T-cell (primary cell): ENCODE measurements at regions of chr9 and their contacts with region 1.

Region 1: GRCh38 chr9:126719618-126720031 is 85.2 kb upstream of the ZBTB43 start:
- DNase-seq: peak; percentile 68 to 95 (median 88)
- ATAC-seq: peak; percentile 46 to 73 (median 51)
- H3K4me3 ChIP-seq: peak overlapping the region in 1 of 2 donors; percentile 48
- H3K4me3 Mint-ChIP-seq: peak overlapping the region; percentile 47 to 87 (median 58)
- H3K27ac ChIP-seq: peak overlapping the region; percentile 99
- H3K27ac Mint-ChIP-seq: peak overlapping the region; percentile 96 to 97
- H3K4me1 ChIP-seq: peaks cover 27 to 50% of the 10 kb centered on the region in 2 experiments
- H3K4me1 Mint-ChIP-seq: peaks cover 40 to 53% (median 49%) of the 10 kb centered on the region in 3 donors
- H3K27me3 ChIP-seq: no peaks in the 10 kb centered on the region
- H3K27me3 Mint-ChIP-seq: no peaks in the 10 kb centered on the region

Region 2: GRCh38 chr9:126694206-126695081 is 25.2 kb before region 1 on chr9:
- CTCF ChIA-PET with region 1: no interaction called
- POLR2A ChIA-PET with region 1: no interaction called
- DNase-seq: no peak
- ATAC-seq: no peak
- H3K4me3 ChIP-seq: no peak overlapping the region
- H3K4me3 Mint-ChIP-seq: no peak overlapping the region
- H3K27ac ChIP-seq: no peak overlapping the region
- H3K27ac Mint-ChIP-seq: no peak overlapping the region
- H3K4me1 ChIP-seq: no peaks in the 10 kb centered on the region
- H3K4me1 Mint-ChIP-seq: no peaks in the 10 kb centered on the region
- H3K27me3 ChIP-seq: peaks cover 0 to 49% of the 10 kb centered on the region in 2 experiments
- H3K27me3 Mint-ChIP-seq: peaks cover 19 to 33% of the 10 kb centered on the region in 2 donors

Region 3: DNA sequence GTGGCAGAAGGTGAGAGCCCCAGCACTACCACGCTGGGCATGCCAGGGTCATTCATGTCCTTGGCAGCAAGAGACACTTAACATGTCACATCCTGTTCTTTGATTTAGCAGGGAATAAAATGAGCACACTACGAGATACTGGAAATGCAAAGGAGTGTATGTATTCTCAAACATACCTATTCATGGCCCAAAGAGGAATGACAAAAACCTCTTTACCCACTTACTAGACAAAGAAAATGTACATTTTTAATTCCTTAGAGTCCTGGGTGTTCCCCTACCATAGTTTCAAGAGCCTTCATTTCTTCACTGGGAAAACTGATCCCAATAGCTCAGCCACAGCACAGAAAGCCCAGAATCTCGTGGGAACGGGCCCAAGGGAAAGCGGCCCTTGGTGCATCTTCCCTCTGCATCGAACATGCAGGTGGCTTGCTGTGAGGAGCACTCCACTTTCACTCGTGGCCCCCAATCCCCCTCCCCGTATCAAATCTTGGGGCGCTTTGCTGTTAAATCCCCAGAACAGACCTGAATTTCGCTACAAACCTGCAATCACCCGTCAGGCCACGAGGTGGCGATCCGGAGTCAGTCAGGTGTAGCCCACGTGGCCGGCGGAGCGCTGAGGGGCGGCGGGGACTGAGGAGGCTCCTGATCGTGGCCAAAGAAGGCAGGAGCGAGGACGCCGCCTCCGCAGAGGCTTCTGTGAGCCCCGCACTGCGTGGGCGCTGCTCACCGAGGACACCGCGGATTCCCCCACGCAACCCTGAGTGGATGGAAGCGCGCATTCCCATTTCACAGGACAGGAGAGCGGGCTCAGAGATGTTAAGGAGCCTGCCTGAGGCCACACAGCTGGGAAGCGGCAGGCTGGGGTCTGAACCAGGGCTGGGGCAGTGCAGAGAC is 14.5 kb before region 1 on chr9:
- CTCF ChIA-PET with region 1: interaction called in 1 of 2 experiments, 29 read pairs
- POLR2A ChIA-PET with region 1: interaction called in 1 of 2 experiments, 3 read pairs
- DNase-seq: peak; percentile 61 to 92 (median 80)
- ATAC-seq: peak; percentile 75 to 87 (median 80)
- H3K4me3 ChIP-seq: peak overlapping the region in 1 of 2 donors; percentile 7
- H3K4me3 Mint-ChIP-seq: peak overlapping the region; percentile 37 to 79 (median 56)
- H3K27ac ChIP-seq: no peak overlapping the region
- H3K27ac Mint-ChIP-seq: peak overlapping the region in 1 of 2 donors; percentile 34
- H3K4me1 ChIP-seq: peaks cover 0 to 21% of the 10 kb centered on the region in 2 experiments
- H3K4me1 Mint-ChIP-seq: peaks cover 17 to 19% (median 18%) of the 10 kb centered on the region in 3 donors
- H3K27me3 ChIP-seq: peaks cover 0 to 51% of the 10 kb centered on the region in 2 experiments
- H3K27me3 Mint-ChIP-seq: peaks cover 14 to 46% of the 10 kb centered on the region in 2 donors

Region 4: GRCh38 chr9:126781186-126782052 is 61.8 kb after region 1 on chr9:
- CTCF ChIA-PET with region 1: interaction called, 4 to 13 read pairs
- POLR2A ChIA-PET with region 1: no interaction called
- DNase-seq: peak; percentile 43 to 87 (median 76)
- ATAC-seq: peak; percentile 85 to 95 (median 88)
- H3K4me3 ChIP-seq: no peak overlapping the region
- H3K4me3 Mint-ChIP-seq: no peak overlapping the region
- H3K27ac ChIP-seq: no peak overlapping the region
- H3K27ac Mint-ChIP-seq: no peak overlapping the region
- H3K4me1 ChIP-seq: peaks cover 0 to 7% of the 10 kb centered on the region in 2 experiments
- H3K4me1 Mint-ChIP-seq: no peaks in the 10 kb centered on the region
- H3K27me3 ChIP-seq: peaks cover 0 to 46% of the 10 kb centered on the region in 2 experiments
- H3K27me3 Mint-ChIP-seq: peaks cover 22 to 38% of the 10 kb centered on the region in 2 donors

Region 5: DNA sequence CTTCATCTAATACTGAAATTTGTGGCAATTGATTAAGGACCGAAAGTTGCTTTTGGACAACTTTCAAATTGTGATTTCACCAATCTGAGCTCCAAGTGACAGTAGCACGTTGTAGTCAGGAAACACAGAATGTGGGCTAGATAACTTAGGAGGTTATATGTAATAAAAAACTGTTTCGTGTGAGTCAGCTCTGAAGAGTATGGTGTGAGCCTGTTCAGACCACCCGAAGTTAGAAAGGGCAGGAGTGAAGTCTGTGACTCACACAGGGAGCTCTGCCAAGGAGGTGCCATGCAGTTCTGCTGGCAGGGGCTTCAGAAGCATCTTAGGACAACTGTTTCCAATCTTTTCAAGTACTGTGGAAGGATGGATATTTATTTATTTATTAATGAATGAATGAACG is 124.5 kb after region 1 on chr9:
- CTCF ChIA-PET with region 1: no interaction called
- POLR2A ChIA-PET with region 1: no interaction called
- DNase-seq: no peak
- ATAC-seq: no peak
- H3K4me3 ChIP-seq: no peak overlapping the region
- H3K4me3 Mint-ChIP-seq: no peak overlapping the region
- H3K27ac ChIP-seq: no peak overlapping the region
- H3K27ac Mint-ChIP-seq: no peak overlapping the region
- H3K4me1 ChIP-seq: no peaks in the 10 kb centered on the region
- H3K4me1 Mint-ChIP-seq: peaks cover 0 to 2% (median 1%) of the 10 kb centered on the region in 3 donors
- H3K27me3 ChIP-seq: peaks cover 0 to 6% of the 10 kb centered on the region in 2 experiments
- H3K27me3 Mint-ChIP-seq: peaks cover 4 to 5% of the 10 kb centered on the region in 2 donors